Activated CD4-positive, alpha-beta memory T cell treated with anti-CD3 and anti-CD28 coated beads for 36 hours (primary cell): ENCODE measurements at regions of chr19 and their contacts with region 1.

Region 1: DNA sequence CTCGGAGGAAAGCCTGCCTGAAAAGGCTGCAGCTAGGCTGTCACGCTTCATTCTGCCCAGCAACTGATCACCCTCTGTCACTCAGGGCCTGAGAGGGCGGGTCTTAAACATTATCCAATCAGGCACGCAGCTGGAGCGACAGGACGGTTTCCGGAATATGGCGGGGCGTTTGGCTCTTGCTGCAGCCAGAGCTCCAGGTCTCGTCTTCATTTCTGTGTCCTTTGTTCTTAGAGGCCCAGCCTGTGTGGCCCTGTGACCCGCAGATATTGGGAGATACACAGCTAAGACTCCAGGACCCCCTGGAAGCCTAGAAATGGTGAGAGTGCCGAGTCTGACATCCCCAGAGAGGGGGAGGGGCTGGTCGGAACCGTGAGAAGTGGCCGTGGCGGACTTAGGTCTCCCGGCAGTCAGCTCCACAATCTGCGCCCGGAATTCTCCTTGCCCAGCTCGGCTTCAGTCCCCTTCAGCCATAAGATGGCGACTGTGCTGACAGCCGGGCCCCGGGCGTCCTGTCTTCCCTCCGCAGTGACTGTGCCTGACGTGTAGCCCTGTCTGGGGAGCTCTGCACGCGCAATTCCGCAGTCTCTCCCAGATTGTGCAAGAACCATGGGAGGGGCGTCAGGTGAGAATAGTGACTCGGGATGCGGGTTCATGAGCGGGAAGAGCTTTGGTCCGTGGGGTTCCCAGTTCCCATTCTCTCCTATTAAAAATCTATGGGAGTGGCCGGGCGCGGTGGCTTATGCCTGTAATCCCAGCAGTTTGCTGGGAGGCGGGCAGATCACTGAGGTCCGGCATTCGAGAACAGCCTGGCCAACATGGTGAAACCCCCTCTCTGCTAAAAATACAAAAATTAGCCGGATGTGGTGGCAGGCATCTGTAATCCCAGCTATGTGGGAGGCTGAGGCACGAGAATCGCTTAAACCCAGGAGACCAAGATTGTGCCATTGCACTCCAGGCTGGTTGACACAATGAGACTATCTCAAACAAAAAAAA is at the start of gene ZNF429:
- DNase-seq: peak; percentile 94
- H3K4me3 Mint-ChIP-seq: peak within 1 kb of the TSS; percentile 100
- H3K27ac Mint-ChIP-seq: peak within 1 kb of the TSS; percentile 99
- H3K4me1 Mint-ChIP-seq: peaks cover 33% of the 10 kb centered on the region
- H3K27me3 Mint-ChIP-seq: no peaks in the 10 kb centered on the region
- total RNA-seq, gene ZNF429: 9.0 to 9.5 TPM

Region 2: DNA sequence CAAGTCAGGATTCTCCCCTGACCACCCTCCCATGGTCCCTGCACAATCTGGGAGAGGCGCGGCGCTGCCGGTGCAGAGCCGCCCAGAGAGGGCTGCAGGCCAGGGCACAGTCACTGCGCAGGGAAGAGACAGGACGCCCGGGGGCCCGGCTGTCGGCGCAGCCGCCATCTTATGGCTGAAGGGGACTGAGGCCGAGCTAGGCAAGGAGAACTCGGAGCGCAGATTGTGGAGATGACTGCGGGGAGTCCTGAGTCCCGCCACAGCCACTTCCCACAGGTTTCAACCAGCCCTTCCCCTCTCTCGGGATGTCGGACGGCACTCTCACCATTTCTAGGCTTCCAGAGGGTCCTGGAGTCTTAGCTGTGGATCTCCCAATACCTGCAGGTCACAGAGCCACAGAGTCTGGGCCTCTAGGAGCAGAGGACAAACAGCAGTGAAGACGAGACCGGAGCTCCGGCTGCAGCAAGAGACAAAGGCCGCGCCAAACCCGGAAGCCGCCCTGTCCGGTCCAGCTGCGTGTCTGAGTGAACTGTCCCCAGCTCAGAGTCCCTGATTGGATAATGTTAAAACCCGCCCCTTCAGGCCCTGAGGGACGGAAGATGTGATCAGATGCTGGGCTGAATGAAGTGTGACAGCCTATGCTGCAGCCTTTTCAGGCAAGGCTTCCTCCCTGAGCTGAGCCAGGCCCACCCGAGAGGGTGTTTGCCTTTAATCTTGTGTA is 176.7 kb before region 1 on chr19 and contains the start of gene ZNF708:
- CTCF ChIA-PET with region 1: interaction called, 5 read pairs
- POLR2A ChIA-PET with region 1: interaction called, 11 read pairs
- intact Hi-C with region 1: loop called (anchors 10 kb)
- DNase-seq: peak; percentile 89
- H3K4me3 Mint-ChIP-seq: peak within 1 kb of the TSS; percentile 96
- H3K27ac Mint-ChIP-seq: peak within 1 kb of the TSS; percentile 99
- H3K4me1 Mint-ChIP-seq: peaks cover 33% of the 10 kb centered on the region
- H3K27me3 Mint-ChIP-seq: no peaks in the 10 kb centered on the region
- total RNA-seq, gene ZNF708: 10.1 to 11.1 TPM

Region 3: DNA sequence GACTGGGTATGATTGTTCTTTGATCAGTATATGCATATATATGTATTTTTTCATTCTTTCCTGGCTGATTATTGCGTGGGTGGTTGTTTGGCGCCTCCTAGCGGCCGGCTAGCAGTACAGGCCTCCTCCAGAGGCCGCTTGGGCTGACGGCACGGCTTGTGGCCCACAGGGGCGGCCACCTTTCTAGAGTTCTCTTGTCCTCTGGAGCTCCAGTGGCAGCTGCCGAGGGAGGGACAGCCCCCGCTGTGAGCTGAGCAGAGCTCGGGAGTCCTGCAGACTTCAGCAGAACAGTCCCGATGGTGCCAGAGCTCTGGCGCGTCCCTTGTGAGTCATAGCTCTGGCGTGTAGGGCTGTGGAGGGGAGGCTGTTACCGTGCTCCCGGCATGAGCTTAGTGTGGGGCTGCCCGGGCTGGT is 22.9 kb before region 1 on chr19:
- CTCF ChIA-PET with region 1: interaction called, 27 read pairs
- POLR2A ChIA-PET with region 1: no interaction called
- intact Hi-C with region 1: no loop called
- DNase-seq: peak; percentile 81
- H3K4me3 Mint-ChIP-seq: peak overlapping the region; percentile 26
- H3K27ac Mint-ChIP-seq: peak overlapping the region; percentile 38
- H3K4me1 Mint-ChIP-seq: peaks cover 2% of the 10 kb centered on the region
- H3K27me3 Mint-ChIP-seq: no peaks in the 10 kb centered on the region

Region 4: GRCh38 chr19:21581646-21582240 is 76.0 kb after region 1 on chr19:
- CTCF ChIA-PET with region 1: no interaction called
- POLR2A ChIA-PET with region 1: no interaction called
- intact Hi-C with region 1: loop called (anchors 5 kb)
- DNase-seq: no peak
- H3K4me3 Mint-ChIP-seq: no peak overlapping the region
- H3K27ac Mint-ChIP-seq: no peak overlapping the region
- H3K4me1 Mint-ChIP-seq: peaks cover 9% of the 10 kb centered on the region
- H3K27me3 Mint-ChIP-seq: peaks cover 6% of the 10 kb centered on the region

Region 5: GRCh38 chr19:21835810-21836444 is 330.2 kb after region 1 on chr19 and contains the start of gene ZNF43:
- CTCF ChIA-PET with region 1: no interaction called
- POLR2A ChIA-PET with region 1: interaction called, 8 read pairs
- intact Hi-C with region 1: loop called (anchors 10 kb)
- DNase-seq: peak; percentile 96
- H3K4me3 Mint-ChIP-seq: peak within 1 kb of the TSS; percentile 95
- H3K27ac Mint-ChIP-seq: peak within 1 kb of the TSS; percentile 99
- H3K4me1 Mint-ChIP-seq: peaks cover 37% of the 10 kb centered on the region
- H3K27me3 Mint-ChIP-seq: no peaks in the 10 kb centered on the region
- total RNA-seq, gene ZNF43: 25.2 to 25.3 TPM